Sigmoid colon (tissue), 7 donors: ENCODE measurements at regions of chr2 and their contacts with region 1.

Region 1: DNA sequence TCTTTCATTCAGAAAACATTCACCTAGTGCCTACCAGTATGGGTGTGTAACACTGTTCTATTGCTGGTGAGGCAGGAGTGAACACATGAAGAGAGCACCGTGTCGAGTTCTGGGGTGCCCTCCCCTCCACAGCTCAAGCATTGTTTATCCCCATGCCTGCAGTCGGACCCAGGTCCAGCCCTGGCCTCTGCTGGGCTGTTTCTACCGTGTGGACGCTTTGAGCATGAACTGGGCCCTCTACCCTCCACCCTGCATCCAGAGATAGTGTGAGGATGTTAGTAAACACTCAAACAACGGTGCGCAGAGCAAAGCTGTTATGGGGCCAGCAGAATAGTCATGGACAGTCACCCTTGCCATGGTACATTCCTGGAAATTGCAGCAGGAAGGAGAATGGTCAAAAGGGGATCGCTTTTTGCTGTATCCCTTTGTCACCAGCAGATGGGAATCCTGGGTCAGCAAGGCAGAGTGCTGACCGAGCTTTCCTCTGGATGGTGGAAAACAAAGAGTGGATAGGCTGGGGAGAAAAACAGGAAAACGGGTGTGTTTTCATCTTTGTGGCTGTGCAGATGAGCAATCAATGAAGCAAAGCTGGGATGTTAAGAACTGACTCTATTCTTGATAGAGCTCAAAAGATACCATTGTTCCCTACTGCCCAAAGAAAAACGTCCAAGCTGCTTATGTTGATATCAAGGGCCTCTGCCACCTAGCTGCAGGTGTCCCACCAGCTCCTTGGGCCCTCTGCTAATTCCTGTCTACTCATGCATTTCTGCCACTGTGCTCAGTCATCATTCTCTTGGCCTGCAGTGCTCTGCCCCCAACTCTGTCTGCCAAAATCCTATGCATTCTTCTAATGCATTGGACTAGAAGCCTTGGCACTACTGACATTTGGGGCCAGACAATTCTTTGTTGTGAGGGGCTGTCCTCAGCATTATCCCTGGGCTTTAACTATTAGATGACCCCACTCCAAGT is 38.7 kb downstream of the REEP1 start:
- DNase-seq: no peak
- H3K4me3 ChIP-seq: no peak overlapping the region
- H3K27ac ChIP-seq: peak overlapping the region; percentile 69 to 82 (median 78)
- H3K4me1 ChIP-seq: peaks cover 0 to 77% (median 71%) of the 10 kb centered on the region in 4 donors
- H3K27me3 ChIP-seq: no peaks in the 10 kb centered on the region
- CTCF ChIP-seq: peak in 1 of 4 experiments; percentile 29
- EP300 ChIP-seq: no peak
- POLR2A ChIP-seq: no peak

Region 2: DNA sequence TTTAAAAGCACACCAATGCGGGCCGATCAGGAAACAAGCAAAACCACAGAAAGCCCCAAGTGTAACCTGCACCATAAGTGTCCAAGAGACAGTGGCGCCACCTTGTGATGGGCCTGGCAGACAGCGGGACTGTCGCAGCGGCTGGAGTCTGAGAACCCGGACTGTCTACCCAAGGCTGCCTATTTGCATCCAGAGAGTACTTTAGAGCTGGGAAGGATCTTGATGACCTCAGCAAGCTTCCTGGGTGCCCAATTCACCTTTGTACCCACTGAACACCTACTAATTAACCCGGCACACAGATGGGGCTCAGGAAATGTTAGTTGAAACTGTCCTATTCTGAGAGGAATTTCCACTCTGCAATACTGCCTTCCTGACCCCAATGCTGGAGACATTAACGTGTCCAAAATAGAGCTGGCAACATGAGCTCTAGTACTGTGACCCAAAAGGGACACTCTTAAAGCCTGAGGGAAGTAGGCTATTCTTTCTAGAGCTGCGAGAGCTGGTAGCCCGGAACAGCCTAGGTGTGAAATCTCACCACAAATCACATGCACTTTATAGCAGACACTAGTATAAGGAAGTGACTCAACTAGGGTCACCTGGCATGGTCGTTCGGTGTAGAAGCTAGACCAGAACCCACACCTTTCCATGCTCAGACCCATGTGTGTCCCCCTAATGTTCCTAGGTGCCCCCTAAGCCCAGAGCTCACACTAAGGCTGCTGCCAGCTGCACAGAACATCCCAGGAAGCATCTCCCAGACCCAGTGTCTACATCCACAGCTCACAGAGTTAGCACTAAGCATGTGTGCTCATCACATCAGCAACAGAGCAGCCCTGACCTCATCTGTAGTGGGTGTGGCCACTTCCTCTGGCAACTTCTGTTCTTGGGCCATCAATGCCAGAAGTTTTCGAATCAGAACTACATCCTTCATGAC is 218.4 kb before region 1 on chr2:
- intact Hi-C with region 1: no loop called
- DNase-seq: peak; percentile 87
- H3K4me3 ChIP-seq: no peak overlapping the region
- H3K27ac ChIP-seq: no peak overlapping the region
- H3K4me1 ChIP-seq: no peaks in the 10 kb centered on the region
- H3K27me3 ChIP-seq: no peaks in the 10 kb centered on the region
- CTCF ChIP-seq: peak; percentile 43 to 73 (median 60)
- EP300 ChIP-seq: no peak
- POLR2A ChIP-seq: no peak

Region 3: GRCh38 chr2:86337244-86337836 is 38.6 kb after region 1 on chr2 and contains the start of gene REEP1:
- intact Hi-C with region 1: loop called (anchors 5 kb)
- DNase-seq: peak; percentile 72
- H3K4me3 ChIP-seq: peak within 1 kb of the TSS; percentile 59 to 69 (median 60)
- H3K27ac ChIP-seq: peak within 1 kb of the TSS; percentile 79 to 83 (median 82)
- H3K4me1 ChIP-seq: peaks cover 0 to 42% (median 30%) of the 10 kb centered on the region in 4 donors
- H3K27me3 ChIP-seq: peaks cover 0 to 5% (median 0%) of the 10 kb centered on the region in 3 donors
- CTCF ChIP-seq: no peak
- EP300 ChIP-seq: no peak
- POLR2A ChIP-seq: no peak
- total RNA-seq, gene REEP1: 44.9 to 98.0 (median 70.6) TPM

Region 4: DNA sequence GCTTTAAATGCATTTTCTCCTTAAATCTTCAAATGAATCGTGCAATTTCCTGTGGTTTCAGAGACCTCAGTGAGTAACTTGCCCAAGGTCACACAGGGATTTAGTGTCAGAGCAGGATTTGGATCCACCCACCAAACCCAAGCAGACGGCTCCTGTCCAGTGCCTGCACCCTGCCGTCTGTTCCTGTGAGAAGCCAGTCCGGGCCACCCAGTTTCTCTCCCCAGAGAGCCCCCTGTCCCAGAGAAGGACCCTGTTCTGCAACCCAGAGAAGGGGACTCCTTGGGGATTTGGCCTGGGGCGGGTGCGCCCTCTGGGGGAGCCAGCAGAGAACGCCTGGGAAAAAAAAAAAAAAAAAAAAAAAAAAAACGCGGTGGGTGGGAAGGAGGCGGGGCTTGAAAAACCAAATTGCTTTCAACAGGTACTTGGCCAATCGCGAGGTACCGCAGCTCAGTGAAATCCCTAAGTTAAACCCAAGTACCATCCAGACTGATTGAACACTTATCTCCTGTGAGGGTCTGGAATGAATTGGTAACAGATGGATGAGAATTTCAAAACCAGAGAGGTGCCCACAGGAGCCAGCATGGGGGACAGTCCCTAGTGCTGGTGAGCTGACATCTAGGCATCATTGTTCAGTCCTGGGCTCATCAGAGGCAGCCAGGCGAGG is 69.6 kb after region 1 on chr2:
- intact Hi-C with region 1: loop called (anchors 5 kb)
- DNase-seq: no peak
- H3K4me3 ChIP-seq: peak overlapping the region in 1 of 4 donors; percentile 2
- H3K27ac ChIP-seq: no peak overlapping the region
- H3K4me1 ChIP-seq: peaks cover 0 to 13% (median 9%) of the 10 kb centered on the region in 4 donors
- H3K27me3 ChIP-seq: no peaks in the 10 kb centered on the region
- CTCF ChIP-seq: peak; percentile 32 to 59 (median 50)
- EP300 ChIP-seq: no peak
- POLR2A ChIP-seq: no peak